ENCODE measurements at regions of chr9 and their contacts with region 1.

Region 1: DNA sequence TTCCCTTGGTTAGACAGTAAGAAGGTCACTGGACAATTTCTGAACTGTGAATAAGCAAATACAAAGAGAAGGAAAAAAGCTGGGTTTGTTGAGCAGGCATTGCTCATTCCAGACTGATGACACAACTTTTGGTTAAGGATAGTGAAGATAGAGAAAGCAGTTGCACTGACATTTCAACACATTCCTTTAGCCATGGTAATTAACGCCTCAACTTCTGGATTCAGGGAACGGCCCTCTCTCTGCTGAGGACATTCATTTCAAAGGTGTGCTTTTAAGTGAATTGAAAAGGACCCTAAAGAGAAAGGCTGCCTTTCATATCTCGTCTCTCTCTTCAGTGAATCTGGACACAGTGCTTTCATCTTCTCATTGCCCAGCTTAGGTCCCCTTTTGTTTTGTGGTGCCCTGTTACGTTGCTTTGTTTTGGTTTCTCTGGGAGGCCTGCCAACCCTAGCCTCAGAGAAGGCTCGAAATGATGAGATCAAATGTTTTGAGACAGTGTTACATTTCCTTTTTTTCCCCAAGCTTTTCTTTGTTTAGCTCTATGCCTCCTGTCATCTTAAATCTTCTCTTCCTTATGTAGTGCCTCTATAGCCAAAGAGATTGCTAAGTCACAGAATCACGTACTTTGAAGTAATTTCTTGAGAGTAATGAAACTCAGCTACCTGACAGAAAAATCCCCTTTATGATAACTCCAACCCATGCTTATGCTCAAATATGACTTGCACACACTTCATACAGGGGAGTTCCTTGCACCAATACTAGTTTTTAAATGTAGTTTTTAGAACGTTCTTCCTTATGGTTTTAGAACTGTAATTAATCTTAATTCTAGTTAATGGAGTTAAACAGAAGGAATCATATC is 94.4 kb upstream of the IFNE start:
- DNase-seq: no peak
- H3K4me3 Mint-ChIP-seq: no peak overlapping the region
- H3K27ac Mint-ChIP-seq: no peak overlapping the region
- H3K4me1 Mint-ChIP-seq: peaks cover 31% of the 10 kb centered on the region
- H3K27me3 Mint-ChIP-seq: peaks cover 19% of the 10 kb centered on the region

Region 2: DNA sequence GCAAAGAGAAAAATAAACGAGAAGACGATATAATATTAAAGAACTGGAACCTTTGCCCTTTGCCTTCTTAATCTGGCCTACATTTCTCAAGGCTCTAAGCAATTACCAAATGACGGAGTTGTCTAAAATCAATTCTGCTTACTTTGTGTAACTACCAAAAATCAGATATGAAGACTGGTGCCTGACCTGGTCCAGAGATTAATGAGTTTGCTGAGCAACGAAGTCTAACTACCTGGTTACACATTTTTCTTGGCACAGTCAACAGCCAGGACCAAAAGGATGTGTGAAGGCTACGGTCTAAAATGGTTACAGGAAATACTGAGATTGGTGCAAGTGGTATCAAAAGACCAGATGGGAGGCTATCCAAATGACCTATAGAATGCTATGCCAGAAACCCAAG is 76.6 kb before region 1 on chr9:
- intact Hi-C with region 1: no loop called
- DNase-seq: no peak
- H3K4me3 Mint-ChIP-seq: no peak overlapping the region
- H3K27ac Mint-ChIP-seq: no peak overlapping the region
- H3K4me1 Mint-ChIP-seq: peaks cover 6% of the 10 kb centered on the region
- H3K27me3 Mint-ChIP-seq: peaks cover 4% of the 10 kb centered on the region

Region 3: GRCh38 chr9:21527579-21527978 is 49.0 kb before region 1 on chr9:
- intact Hi-C with region 1: no loop called
- DNase-seq: no peak
- H3K4me3 Mint-ChIP-seq: no peak overlapping the region
- H3K27ac Mint-ChIP-seq: no peak overlapping the region
- H3K4me1 Mint-ChIP-seq: no peaks in the 10 kb centered on the region
- H3K27me3 Mint-ChIP-seq: no peaks in the 10 kb centered on the region

Region 4: DNA sequence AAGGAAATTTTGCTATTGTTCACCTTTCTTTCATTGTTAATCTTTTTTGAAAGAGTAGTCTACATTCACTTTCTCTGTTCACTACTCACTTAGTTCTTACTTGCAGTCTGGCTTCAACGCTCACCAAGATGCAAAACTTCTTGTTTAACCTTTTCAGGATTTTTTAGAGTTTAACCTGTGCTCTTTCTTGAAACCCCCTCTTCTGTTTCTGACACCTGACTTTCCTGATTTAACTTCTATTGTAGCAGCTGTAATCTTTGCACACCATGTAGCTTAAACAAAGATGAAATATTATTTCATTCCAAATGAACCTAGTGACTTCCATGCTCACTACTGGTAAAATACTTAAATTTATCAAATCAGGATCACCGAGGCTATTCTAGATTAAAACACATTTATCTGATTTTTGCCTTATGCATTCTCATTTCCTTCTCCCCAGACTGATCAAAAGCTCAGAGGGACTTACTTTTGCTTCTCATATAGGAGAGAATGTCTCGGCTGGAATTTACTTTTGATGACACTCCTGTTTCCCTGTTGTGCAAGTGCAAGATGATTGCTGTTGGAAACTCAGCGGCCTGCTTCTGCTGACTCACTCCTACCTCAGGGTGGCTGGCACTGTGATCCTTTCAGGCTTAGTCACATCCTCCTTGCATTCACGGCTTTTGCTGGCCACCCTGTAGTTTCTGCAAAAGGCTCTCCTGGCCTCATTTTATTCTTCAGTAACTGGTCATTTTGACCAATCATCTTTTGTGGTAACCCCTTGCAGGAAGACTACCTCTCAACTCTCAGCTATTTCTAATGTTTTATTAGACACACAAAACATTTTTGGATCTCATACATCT is 14.9 kb after region 1 on chr9:
- intact Hi-C with region 1: loop called (anchors 2 kb)
- DNase-seq: peak; percentile 24
- H3K4me3 Mint-ChIP-seq: no peak overlapping the region
- H3K27ac Mint-ChIP-seq: peak overlapping the region; percentile 24
- H3K4me1 Mint-ChIP-seq: peaks cover 19% of the 10 kb centered on the region
- H3K27me3 Mint-ChIP-seq: peaks cover 7% of the 10 kb centered on the region